ENCODE measurements at regions of chr4 and their contacts with region 1.

Region 1: DNA sequence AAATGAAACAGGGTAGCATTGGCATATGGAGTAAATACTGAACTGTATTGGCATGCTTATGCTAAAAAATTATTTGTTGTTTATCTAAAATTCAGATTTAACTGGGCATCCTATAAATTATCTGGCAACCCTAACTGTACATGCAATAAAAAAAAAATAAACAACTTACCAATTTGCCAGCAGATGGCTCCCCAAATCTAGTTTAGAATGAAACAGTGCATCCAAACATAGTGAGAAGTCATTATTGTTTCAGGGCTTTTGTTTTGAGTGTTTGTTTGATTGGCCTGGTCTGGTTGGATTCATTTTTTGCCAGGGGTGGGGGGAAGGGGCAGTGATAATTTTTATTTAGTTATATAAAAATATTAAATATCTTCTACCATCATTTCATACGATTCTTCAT is 12.8 kb upstream of the NSUN7 start:
- DNase-seq: no peak
- H3K4me3 ChIP-seq: no peak overlapping the region
- H3K27ac ChIP-seq: no peak overlapping the region
- H3K4me1 ChIP-seq: peaks cover 2% of the 10 kb centered on the region
- H3K27me3 ChIP-seq: no peaks in the 10 kb centered on the region
- CTCF ChIP-seq: no peak

Region 2: GRCh38 chr4:40648742-40649281 is 88.1 kb before region 1 on chr4:
- intact Hi-C with region 1: no loop called
- DNase-seq: no peak
- H3K4me3 ChIP-seq: no peak overlapping the region
- H3K27ac ChIP-seq: no peak overlapping the region
- H3K4me1 ChIP-seq: no peaks in the 10 kb centered on the region
- H3K27me3 ChIP-seq: no peaks in the 10 kb centered on the region
- CTCF ChIP-seq: no peak

Region 3: GRCh38 chr4:40840985-40841571 is 104.2 kb after region 1 on chr4:
- intact Hi-C with region 1: loop called (anchors 5 kb)
- DNase-seq: peak; percentile 83
- H3K4me3 ChIP-seq: no peak overlapping the region
- H3K27ac ChIP-seq: no peak overlapping the region
- H3K4me1 ChIP-seq: no peaks in the 10 kb centered on the region
- H3K27me3 ChIP-seq: no peaks in the 10 kb centered on the region
- CTCF ChIP-seq: peak; percentile 62

Region 4: GRCh38 chr4:40897557-40898203 is 160.8 kb after region 1 on chr4:
- intact Hi-C with region 1: loop called (anchors 5 kb)
- DNase-seq: peak; percentile 68
- H3K4me3 ChIP-seq: no peak overlapping the region
- H3K27ac ChIP-seq: no peak overlapping the region
- H3K4me1 ChIP-seq: no peaks in the 10 kb centered on the region
- H3K27me3 ChIP-seq: no peaks in the 10 kb centered on the region
- CTCF ChIP-seq: peak; percentile 73

Measured in colonic mucosa (tissue), 4 donors.